Posterior cingulate gyrus (tissue), 11 donors: ENCODE measurements at regions of chr13 and their contacts with region 1.

Region 1: DNA sequence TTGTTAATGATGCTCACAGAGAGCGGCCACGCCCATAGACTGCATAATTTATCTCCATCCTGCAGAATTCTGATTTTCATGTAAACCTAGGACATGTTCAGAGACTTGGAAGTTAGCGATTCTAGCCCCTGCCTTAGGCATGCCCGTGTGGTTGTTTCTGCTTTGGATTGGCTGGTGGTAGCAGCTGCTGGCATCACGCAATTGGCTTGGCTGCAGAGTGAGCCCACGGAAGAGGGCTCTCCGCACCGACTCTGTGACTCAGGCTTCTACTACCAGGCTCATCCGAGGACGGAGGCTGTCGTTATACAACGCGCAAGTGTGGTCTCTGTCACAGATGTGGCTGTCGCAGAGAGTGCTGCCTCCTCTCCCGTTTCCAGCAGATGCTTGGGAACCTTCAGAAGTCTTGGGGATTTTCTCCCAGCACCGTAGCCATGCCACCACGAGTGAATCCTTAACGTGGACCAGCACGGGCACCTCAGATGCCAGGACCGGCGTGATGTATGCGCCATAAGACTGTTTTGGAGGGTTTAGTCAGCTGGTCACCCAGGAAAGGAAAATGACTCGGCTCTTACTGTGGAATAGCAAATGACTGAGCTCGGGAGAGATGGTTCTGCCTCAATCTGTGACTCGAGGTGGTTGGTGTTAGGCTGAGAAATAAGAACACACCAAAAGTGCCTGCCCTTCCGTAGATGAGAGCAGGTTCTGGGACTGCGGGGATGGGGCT is 61.0 kb upstream of the F7 start:
- DNase-seq: peak; percentile 63 to 98 (median 84)

Region 2: GRCh38 chr13:113098162-113098732 is 53.7 kb after region 1 on chr13:
- intact Hi-C with region 1: loop called (anchors 10 kb)
- DNase-seq: peak in 1 of 10 donors; percentile 85

Region 3: DNA sequence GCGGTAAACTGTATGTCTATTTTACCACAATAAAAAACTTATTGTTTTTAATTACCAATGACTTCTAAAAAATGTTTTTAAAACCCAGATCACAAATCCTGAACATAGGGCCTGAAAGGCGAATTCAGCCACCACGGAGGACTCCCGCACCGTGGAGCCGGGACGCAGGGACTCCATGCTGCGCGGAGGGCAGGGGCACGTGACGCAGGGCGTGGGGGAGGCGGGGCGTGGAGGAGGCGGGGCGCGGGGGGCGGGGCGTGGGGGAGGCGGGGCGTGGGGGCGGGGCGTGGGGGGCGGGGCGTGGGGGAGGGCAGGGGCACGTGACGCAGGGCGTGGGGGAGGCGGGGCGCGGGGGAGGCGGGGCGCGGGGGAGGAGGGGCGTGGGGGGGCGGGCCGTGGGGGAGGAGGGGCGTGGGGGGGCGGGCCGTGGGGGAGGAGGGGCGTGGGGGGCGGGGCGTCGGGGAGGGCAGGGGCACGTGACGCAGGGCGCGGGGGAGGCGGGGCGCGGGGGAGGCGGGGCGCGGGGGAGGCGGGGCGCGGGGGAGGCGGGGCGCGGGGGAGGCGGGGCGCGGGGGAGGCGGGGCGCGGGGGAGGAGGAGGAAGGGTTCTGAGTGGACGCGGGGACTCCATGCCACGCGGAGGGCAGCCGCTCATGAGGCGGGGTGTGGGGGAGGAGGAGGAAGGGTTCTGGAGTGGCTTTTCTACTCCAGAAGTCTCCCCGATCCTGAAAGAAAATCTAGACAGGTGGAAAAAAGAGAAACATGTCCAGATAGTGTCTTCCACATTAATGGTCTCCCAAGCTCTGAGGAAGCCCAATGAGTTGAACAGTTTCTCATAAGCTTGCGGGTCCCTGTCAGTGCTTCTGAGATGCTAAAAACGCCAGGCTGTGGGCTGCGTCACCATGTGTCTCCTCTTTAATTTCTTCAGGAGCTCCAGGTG is 109.5 kb after region 1 on chr13:
- intact Hi-C with region 1: loop called (anchors 5 kb)
- DNase-seq: peak; percentile 70 to 97 (median 83)